GM18951 (cell line): ENCODE measurements at regions of chr1 and their contacts with region 1.

Region 1: GRCh38 chr1:7207875-7208646 is 422.8 kb downstream of the CAMTA1 start:
- POLR2A ChIP-seq: no peak

Region 2: GRCh38 chr1:6701437-6702153 is 506.5 kb before region 1 on chr1 and contains the start of gene DNAJC11:
- in situ Hi-C with region 1: loop called (anchors 25 kb)
- POLR2A ChIP-seq: peak; percentile 52